OCI-LY7 (cell line): ENCODE measurements at regions of chr11 and their contacts with region 1.

Region 1: GRCh38 chr11:6481012-6481923 is at the starts of genes ARFIP2 and TIMM10B:
- DNase-seq: peak; percentile 99
- H3K4me3 ChIP-seq: peak within 1 kb of the TSS; percentile 96
- H3K27ac ChIP-seq: peak within 1 kb of the TSS; percentile 70
- H3K4me1 ChIP-seq: peaks cover 22% of the 10 kb centered on the region
- CTCF ChIP-seq: no peak
- total RNA-seq, gene ARFIP2: 40.7 and 55.9 TPM in 2 replicates
- total RNA-seq, gene TIMM10B: 43.7 and 52.8 TPM in 2 replicates

Region 2: DNA sequence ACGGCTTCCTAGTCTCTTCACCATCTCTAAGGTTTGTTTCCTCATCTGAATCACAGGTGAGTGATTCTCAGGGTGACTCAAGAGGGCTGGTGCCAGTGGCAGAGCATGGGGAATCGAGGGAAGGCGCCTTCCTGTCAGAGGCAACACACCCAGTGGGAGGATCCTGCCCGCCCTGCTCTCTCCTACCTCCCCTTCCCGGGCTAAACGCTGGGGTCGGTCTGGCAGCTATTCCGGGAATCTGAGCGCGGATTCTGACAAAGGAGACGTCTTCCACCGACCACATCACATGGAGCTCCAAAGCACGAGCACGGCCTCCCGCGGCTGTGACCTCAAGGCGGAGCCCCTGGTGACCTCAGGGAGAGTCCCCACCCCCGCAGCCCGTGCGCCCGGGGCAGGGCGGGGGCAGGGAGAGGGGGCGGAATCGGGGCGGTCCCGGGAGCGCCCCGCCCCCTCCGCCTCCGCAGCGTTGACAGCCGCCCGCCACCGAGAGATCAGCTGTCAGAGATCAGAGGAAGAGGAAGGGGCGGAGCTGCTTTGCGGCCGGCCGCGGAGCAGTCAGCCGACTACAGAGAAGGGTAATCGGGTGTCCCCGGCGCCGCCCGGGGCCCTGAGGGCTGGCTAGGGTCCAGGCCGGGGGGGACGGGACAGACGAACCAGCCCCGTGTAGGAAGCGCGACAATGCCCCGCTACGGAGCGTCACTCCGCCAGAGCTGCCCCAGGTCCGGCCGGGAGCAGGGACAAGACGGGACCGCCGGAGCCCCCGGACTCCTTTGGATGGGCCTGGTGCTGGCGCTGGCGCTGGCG is 91.1 kb before region 1 on chr11 and contains the start of gene SMPD1:
- CTCF ChIA-PET with region 1: no interaction called
- POLR2A ChIA-PET with region 1: interaction called, 3 read pairs
- intact Hi-C with region 1: loop called (anchors 1 kb)
- DNase-seq: peak; percentile 93
- H3K4me3 ChIP-seq: peak within 1 kb of the TSS; percentile 73
- H3K27ac ChIP-seq: peak within 1 kb of the TSS; percentile 22
- H3K4me1 ChIP-seq: peaks cover 24% of the 10 kb centered on the region
- CTCF ChIP-seq: no peak
- total RNA-seq, gene SMPD1: 5.1 and 5.4 TPM in 2 replicates

Region 3: DNA sequence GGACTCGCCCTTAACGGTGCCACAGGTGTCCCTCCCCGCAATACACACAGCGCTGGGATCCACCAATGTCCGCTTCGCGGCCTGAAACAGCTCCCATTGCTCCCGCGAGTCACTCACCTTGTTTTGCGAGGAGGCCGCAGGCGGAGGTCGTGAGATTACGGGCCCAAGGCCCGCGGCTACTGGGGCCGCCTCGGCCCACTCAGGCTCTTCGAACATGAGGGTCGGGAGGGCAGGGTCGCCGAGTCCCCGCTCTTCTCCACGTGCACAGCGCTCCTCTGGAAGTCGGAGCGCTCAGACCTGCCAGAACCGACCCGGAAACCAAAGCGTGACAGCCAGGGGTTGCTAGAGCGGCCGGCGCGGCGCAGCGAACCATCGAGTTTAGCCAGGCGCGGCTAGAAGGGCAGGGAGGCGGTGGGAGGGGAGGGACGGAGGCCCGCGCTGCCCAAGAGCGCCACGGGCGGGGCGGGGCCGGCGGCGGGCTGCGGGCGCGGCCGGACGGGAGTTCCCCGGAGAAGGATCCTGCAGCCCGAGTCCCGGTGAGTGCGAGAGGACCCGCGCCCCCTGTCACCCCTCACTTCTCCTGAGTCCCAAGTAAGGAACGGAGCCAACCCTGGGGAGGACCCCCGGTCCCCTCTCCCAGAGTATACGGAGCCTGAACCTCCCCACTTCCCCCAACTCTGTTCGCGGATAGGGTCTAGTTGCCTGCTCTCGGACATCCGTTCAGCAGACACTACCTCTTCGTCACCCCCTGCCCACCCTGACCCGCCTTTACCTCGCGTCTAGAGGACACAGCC is 122.2 kb after region 1 on chr11 and contains the starts of genes ILK and RRP8:
- CTCF ChIA-PET with region 1: no interaction called
- POLR2A ChIA-PET with region 1: no interaction called
- intact Hi-C with region 1: loop called (anchors 5 kb)
- DNase-seq: peak; percentile 90
- H3K4me3 ChIP-seq: peak within 1 kb of the TSS; percentile 91
- H3K27ac ChIP-seq: peak within 1 kb of the TSS; percentile 67
- H3K4me1 ChIP-seq: peaks cover 47% of the 10 kb centered on the region
- CTCF ChIP-seq: 0 out of 2 replicates have a peak, but pooled peaks have one; percentile 18
- total RNA-seq, gene ILK: 52.0 and 64.8 TPM in 2 replicates
- total RNA-seq, gene RRP8: 26.4 and 29.4 TPM in 2 replicates